ENCODE measurements at regions of chr5 and their contacts with region 1.

Region 1: DNA sequence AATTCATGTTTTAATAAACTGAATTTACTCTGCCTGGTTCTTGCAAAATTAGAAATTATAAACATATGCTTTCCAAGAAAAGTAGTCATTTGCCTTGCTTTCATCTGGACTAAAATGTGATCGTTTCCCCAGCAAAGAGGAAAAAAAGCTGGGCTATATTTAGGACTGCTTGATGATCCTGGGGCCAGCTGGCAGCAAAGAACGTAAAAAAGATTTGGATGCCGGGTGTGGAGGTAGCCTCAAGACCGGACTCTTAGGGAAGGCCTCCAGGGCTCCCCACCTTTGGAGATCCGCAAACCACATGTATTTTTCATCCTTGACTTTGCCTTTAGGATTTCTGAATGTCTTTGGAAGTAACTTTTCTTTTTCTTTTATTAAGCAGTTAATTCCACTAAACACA is 156.1 kb upstream of the SEMA6A start:
- DNase-seq: no peak
- H3K4me3 ChIP-seq: no peak overlapping the region
- H3K27ac ChIP-seq: no peak overlapping the region
- H3K4me1 ChIP-seq: no peaks in the 10 kb centered on the region
- CTCF ChIP-seq: no peak

Region 2: GRCh38 chr5:116686438-116686837 is 44.3 kb before region 1 on chr5:
- CTCF ChIA-PET with region 1: no interaction called
- POLR2A ChIA-PET with region 1: no interaction called
- intact Hi-C with region 1: loop called (anchors 2 kb)
- DNase-seq: no peak
- H3K4me3 ChIP-seq: no peak overlapping the region
- H3K27ac ChIP-seq: no peak overlapping the region
- H3K4me1 ChIP-seq: no peaks in the 10 kb centered on the region
- CTCF ChIP-seq: no peak

Region 3: GRCh38 chr5:116788851-116789403 is 58.2 kb after region 1 on chr5:
- CTCF ChIA-PET with region 1: no interaction called
- POLR2A ChIA-PET with region 1: no interaction called
- intact Hi-C with region 1: no loop called
- DNase-seq: no peak
- H3K4me3 ChIP-seq: no peak overlapping the region
- H3K27ac ChIP-seq: no peak overlapping the region
- H3K4me1 ChIP-seq: no peaks in the 10 kb centered on the region
- CTCF ChIP-seq: no peak

Region 4: GRCh38 chr5:116998024-116998423 is 267.3 kb after region 1 on chr5:
- CTCF ChIA-PET with region 1: no interaction called
- POLR2A ChIA-PET with region 1: no interaction called
- intact Hi-C with region 1: no loop called
- DNase-seq: no peak
- H3K4me3 ChIP-seq: no peak overlapping the region
- H3K27ac ChIP-seq: no peak overlapping the region
- H3K4me1 ChIP-seq: no peaks in the 10 kb centered on the region
- CTCF ChIP-seq: no peak